ENCODE measurements at regions of chr18 and their contacts with region 1.

Region 1: GRCh38 chr18:8627107-8627472 is 17.9 kb downstream of the RAB12 start:
- DNase-seq: no peak
- CTCF ChIP-seq: no peak

Region 2: GRCh38 chr18:8608795-8609658 is 18.1 kb before region 1 on chr18 and contains the start of gene RAB12:
- CTCF ChIA-PET with region 1: interaction called, 13 read pairs
- POLR2A ChIA-PET with region 1: no interaction called
- DNase-seq: peak; percentile 86
- CTCF ChIP-seq: peak; percentile 82

Measured in GM10248 (cell line).